WTC11 (cell line): ENCODE measurements at regions of chr1 and their contacts with region 1.

Region 1: GRCh38 chr1:67685067-67685557 is at the start of gene GADD45A:
- DNase-seq: peak; percentile 98
- ATAC-seq: peak; percentile 95
- H3K4me3 Mint-ChIP-seq: peak within 1 kb of the TSS; percentile 88
- H3K27ac Mint-ChIP-seq: peak within 1 kb of the TSS; percentile 17
- H3K4me1 Mint-ChIP-seq: peaks cover 28% of the 10 kb centered on the region
- H3K27me3 Mint-ChIP-seq: no peaks in the 10 kb centered on the region
- CTCF ChIP-seq: no peak
- total RNA-seq, gene GADD45A: 20.8 to 34.5 TPM (median 24.0 TPM) in 3 replicates

Region 2: GRCh38 chr1:67535474-67535873 is 149.6 kb before region 1 on chr1:
- CTCF ChIA-PET with region 1: interaction called, 16 read pairs
- POLR2A ChIA-PET with region 1: interaction called, 3 read pairs
- DNase-seq: peak; percentile 80
- ATAC-seq: peak; percentile 80
- H3K4me3 Mint-ChIP-seq: no peak overlapping the region
- H3K27ac Mint-ChIP-seq: no peak overlapping the region
- H3K4me1 Mint-ChIP-seq: no peaks in the 10 kb centered on the region; the same call in 1 of the 2 replicates
- H3K27me3 Mint-ChIP-seq: peaks cover 6% of the 10 kb centered on the region; the same call in 1 of the 2 replicates
- CTCF ChIP-seq: peak; percentile 87

Region 3: DNA sequence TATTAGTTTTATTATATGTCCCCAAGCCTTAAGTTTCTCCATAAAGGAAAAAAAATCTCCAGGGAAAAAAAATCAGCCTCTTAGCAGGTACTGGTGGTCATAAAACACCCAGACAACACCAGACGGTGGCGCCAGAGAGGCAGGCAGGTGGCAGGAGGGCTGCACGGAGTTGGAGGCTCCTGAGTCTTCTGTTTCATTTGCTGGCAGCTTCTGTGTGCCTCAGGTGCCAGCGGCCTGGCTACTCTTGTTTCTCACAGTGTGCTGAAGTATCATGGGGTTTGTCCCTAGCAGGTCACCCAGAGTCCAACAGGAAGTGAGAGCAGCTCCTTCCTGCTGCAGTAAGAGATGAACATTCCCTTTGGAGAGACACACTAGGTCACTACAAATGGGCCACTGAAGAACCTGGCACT is 123.4 kb before region 1 on chr1:
- CTCF ChIA-PET with region 1: interaction called, 14 read pairs
- POLR2A ChIA-PET with region 1: no interaction called
- DNase-seq: peak; percentile 97
- ATAC-seq: peak; percentile 92
- H3K4me3 Mint-ChIP-seq: no peak overlapping the region
- H3K27ac Mint-ChIP-seq: no peak overlapping the region
- H3K4me1 Mint-ChIP-seq: peaks cover 8% of the 10 kb centered on the region
- H3K27me3 Mint-ChIP-seq: peaks cover 3% of the 10 kb centered on the region; the same call in 1 of the 2 replicates
- CTCF ChIP-seq: peak; percentile 76

Region 4: DNA sequence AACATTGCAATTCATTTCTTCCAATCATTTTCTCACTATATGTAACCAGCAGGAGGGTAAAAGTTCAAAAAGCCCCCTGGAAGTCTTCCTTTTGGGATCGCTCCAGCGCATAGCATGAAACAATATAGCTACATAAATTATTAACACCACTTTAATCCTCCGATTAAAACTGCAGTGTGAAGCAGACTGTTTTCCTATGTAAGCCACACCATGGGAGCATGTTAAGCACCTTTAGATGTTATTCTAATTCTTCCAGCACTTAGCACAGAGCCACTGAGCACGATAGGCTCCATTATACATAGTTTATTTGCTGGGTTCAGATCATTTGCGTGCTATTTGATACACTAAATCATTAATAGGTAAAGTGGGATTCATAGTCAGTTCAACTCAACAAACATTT is 18.5 kb before region 1 on chr1:
- CTCF ChIA-PET with region 1: no interaction called
- POLR2A ChIA-PET with region 1: no interaction called
- DNase-seq: no peak
- ATAC-seq: no peak
- H3K4me3 Mint-ChIP-seq: no peak overlapping the region
- H3K27ac Mint-ChIP-seq: no peak overlapping the region
- H3K4me1 Mint-ChIP-seq: no peaks in the 10 kb centered on the region
- H3K27me3 Mint-ChIP-seq: peaks cover 3% of the 10 kb centered on the region; the same call in 1 of the 2 replicates
- CTCF ChIP-seq: no peak

Region 5: GRCh38 chr1:67700692-67701410 is 15.7 kb after region 1 on chr1:
- CTCF ChIA-PET with region 1: interaction called, 12 read pairs
- POLR2A ChIA-PET with region 1: interaction called, 6 read pairs
- DNase-seq: peak; percentile 53
- ATAC-seq: peak; percentile 97
- H3K4me3 Mint-ChIP-seq: no peak overlapping the region
- H3K27ac Mint-ChIP-seq: peak overlapping the region; percentile 42
- H3K4me1 Mint-ChIP-seq: peaks cover 18% of the 10 kb centered on the region
- H3K27me3 Mint-ChIP-seq: no peaks in the 10 kb centered on the region
- CTCF ChIP-seq: no peak

Region 6: GRCh38 chr1:67747667-67748546 is 62.8 kb after region 1 on chr1:
- CTCF ChIA-PET with region 1: interaction called, 5 read pairs
- POLR2A ChIA-PET with region 1: interaction called, 17 read pairs
- DNase-seq: no peak
- ATAC-seq: no peak
- H3K4me3 Mint-ChIP-seq: no peak overlapping the region
- H3K27ac Mint-ChIP-seq: no peak overlapping the region
- H3K4me1 Mint-ChIP-seq: peaks cover 96% of the 10 kb centered on the region
- H3K27me3 Mint-ChIP-seq: peaks cover 12% of the 10 kb centered on the region
- CTCF ChIP-seq: no peak

Region 7: GRCh38 chr1:68010090-68010489 is 325.0 kb after region 1 on chr1:
- CTCF ChIA-PET with region 1: no interaction called
- POLR2A ChIA-PET with region 1: no interaction called
- DNase-seq: no peak
- ATAC-seq: peak; percentile 46; the same call in 1 of the 2 replicates
- H3K4me3 Mint-ChIP-seq: no peak overlapping the region
- H3K27ac Mint-ChIP-seq: no peak overlapping the region
- H3K4me1 Mint-ChIP-seq: no peaks in the 10 kb centered on the region
- H3K27me3 Mint-ChIP-seq: no peaks in the 10 kb centered on the region
- CTCF ChIP-seq: no peak